ENCODE measurements at regions of chr12 and their contacts with region 1.

Region 1: DNA sequence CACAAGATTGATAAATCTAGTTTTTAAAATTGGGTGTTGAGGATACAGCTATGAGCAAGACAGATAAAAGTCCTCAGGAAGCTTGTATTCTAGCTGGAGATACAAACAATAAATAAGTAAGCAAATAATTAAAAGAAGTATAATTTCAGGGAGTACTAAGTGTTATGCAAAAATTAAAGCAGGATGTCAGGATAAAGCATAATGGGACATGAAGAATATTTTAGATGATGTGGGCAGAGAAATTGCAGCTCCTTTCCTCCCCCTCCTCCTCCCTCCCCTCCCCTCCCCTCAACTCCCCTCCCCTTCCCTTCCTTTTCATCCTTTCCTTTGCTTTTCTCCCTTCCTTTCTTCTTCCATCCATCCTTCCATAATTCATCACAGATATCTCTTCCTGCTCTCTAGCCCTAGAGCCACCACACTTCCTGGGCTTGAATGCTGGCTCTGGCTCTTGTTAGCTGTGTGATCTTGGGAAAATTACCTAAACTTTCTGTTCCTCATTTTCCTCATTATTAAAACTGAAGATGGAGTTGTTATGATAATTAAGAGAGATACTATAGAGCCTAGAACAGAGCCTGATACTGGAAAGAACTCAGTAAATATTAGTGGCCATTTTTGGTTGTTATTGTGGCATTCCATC is 323.9 kb downstream of the AACS start:
- DNase-seq: no peak

Region 2: GRCh38 chr12:125371033-125371432 is 18.1 kb before region 1 on chr12:
- intact Hi-C with region 1: loop called in 1 of 2 experiments (anchors 1 kb)
- DNase-seq: no peak